GM12878 (cell line): ENCODE measurements at regions of chr13 and their contacts with region 1.

Region 1: DNA sequence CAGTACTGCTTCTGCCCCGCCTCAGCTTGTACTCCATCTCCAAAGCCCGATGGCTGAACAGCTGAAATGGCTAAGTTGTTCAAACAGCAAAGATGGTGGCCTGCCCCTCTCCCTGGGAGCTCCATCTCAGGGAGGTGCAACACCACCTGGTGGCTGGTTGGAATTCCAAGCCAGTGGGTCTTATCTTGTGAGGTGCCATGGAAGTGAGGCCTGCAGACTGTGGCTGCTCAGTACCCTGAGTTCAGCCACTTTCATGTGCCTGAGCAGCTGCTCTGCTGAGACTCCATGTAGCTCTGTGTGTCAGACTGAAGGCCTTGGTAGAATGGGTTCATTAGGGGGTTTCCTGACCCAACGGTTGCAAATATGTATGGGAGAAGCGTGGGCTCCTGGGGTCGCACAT is 67.3 kb upstream of the SPRY2 start:
- DNase-seq: no peak
- ATAC-seq: peak; percentile 75
- H3K4me3 ChIP-seq: no peak overlapping the region
- H3K27ac ChIP-seq: no peak overlapping the region
- H3K4me1 ChIP-seq: no peaks in the 10 kb centered on the region
- H3K27me3 ChIP-seq: no peaks in the 10 kb centered on the region
- CTCF ChIP-seq: 0 out of 6 replicates have a peak, but pooled peaks of 1 of the 3 experiments have one; percentile 17
- EP300 ChIP-seq: no peak
- POLR2A ChIP-seq: no peak
- RAD21 ChIP-seq: no peak

Region 2: DNA sequence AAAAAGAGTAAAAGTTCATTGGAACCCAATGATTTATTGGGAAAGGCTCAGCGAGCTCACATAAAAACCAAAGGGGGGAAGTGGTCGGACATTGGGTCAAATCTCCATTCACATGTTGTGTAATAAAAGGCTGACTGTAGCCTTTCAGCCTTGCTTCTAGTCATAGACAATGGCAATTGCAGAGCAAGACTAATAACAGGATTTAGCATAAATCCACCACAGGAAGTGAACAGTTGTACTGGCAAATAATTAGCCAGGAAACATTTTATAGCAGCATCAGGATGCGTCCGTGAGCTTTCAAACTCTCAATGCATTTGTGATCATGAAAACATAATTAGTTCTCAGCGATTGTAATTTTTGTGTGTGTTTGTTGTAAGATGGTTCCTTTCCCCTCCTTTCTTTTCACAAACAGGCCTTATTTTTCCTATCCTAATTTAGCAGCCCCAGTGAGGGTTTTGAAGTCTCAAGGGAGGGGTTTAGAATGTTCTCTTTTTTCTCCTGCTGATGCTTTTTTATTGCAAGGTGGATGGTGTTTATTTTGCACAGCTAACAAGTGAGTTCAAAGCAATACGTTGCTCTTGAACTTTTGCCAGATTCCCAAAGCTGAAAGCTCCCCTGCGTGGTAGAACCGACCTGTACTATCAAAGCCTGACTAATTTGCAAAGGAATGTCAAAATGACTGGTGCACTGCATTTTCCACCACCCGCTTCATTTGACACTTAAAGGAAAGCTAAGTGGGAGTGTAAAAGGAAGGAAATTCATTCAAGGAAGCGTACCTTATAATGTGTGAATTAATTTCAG is 172.9 kb before region 1 on chr13:
- CTCF ChIA-PET with region 1: no interaction called
- POLR2A ChIA-PET with region 1: no interaction called
- RAD21 ChIA-PET with region 1: no interaction called
- SMC1A ChIA-PET with region 1: no interaction called
- in situ Hi-C with region 1: no loop called
- intact Hi-C with region 1: no loop called
- DNase-seq: no peak
- ATAC-seq: peak; percentile 89
- H3K4me3 ChIP-seq: no peak overlapping the region
- H3K27ac ChIP-seq: no peak overlapping the region
- H3K4me1 ChIP-seq: no peaks in the 10 kb centered on the region
- H3K27me3 ChIP-seq: no peaks in the 10 kb centered on the region
- CTCF ChIP-seq: no peak
- EP300 ChIP-seq: peak in 1 of 2 experiments; percentile 64; a peak in 1 of 4 replicates
- POLR2A ChIP-seq: no peak
- RAD21 ChIP-seq: no peak

Region 3: DNA sequence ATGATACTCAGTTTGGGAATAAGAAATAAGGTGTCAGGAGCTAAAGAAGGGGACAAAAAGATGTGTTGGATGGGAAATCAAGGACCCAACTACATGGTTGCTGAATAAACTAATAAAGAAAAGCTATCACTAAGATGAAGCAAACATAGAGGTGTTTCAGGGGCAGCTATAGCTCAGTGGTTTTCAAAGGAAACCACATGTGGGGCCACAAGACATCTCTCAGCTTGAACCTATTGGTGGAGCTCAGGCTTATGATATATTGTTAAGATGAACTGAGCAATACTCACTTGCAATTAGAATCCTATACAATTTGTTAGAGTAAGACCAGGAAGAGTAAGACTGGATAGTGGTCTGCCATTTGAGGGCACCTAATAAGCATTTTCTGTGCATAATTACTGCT is 22.3 kb before region 1 on chr13:
- CTCF ChIA-PET with region 1: interaction called, 12 read pairs
- POLR2A ChIA-PET with region 1: interaction called, 3 read pairs
- RAD21 ChIA-PET with region 1: interaction called, 8 read pairs
- SMC1A ChIA-PET with region 1: interaction called, 8 read pairs
- in situ Hi-C with region 1: no loop called
- intact Hi-C with region 1: no loop called
- DNase-seq: no peak
- ATAC-seq: peak; percentile 91
- H3K4me3 ChIP-seq: no peak overlapping the region
- H3K27ac ChIP-seq: no peak overlapping the region
- H3K4me1 ChIP-seq: no peaks in the 10 kb centered on the region
- H3K27me3 ChIP-seq: no peaks in the 10 kb centered on the region
- CTCF ChIP-seq: no peak
- EP300 ChIP-seq: no peak
- POLR2A ChIP-seq: no peak
- RAD21 ChIP-seq: 0 out of 2 replicates have a peak, but pooled peaks have one; percentile 14

Region 4: DNA sequence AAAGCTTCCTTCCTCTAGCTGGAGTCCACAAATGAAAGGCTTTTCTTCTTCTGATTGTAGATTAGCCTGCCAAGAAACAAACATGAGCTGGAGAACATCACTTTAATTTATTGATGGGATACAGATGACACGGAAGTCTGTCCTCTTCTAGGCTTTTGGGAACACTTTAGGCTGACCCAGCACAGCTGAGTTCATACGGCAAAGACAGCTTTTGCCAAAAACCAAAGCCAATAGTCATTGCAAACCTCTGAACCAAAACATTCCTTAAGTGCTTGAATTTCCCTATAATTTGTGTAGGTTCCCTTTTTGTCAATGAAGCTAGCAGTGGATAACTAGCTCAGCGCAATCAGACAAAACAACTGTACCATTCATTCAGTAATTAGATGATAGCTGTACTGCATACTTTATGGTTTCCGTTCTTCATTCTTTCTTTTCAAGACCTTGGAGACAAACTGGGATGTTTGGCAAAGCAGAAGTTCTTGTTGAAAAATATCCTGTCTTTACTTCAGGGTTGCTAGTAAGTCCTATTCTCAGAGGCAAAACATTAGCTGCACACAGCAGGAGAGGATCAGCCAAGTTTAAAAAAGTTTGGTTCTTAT is 28.4 kb after region 1 on chr13:
- CTCF ChIA-PET with region 1: interaction called, 6 read pairs
- POLR2A ChIA-PET with region 1: interaction called, 7 read pairs
- RAD21 ChIA-PET with region 1: interaction called, 13 read pairs
- SMC1A ChIA-PET with region 1: interaction called, 707 read pairs
- in situ Hi-C with region 1: no loop called
- intact Hi-C with region 1: no loop called
- DNase-seq: no peak
- ATAC-seq: no peak
- H3K4me3 ChIP-seq: no peak overlapping the region
- H3K27ac ChIP-seq: no peak overlapping the region
- H3K4me1 ChIP-seq: no peaks in the 10 kb centered on the region
- H3K27me3 ChIP-seq: no peaks in the 10 kb centered on the region
- CTCF ChIP-seq: no peak
- EP300 ChIP-seq: no peak
- POLR2A ChIP-seq: no peak
- RAD21 ChIP-seq: no peak

Region 5: GRCh38 chr13:80454245-80454644 is 46.0 kb after region 1 on chr13:
- CTCF ChIA-PET with region 1: interaction called, 6 read pairs
- POLR2A ChIA-PET with region 1: interaction called, 10 read pairs
- RAD21 ChIA-PET with region 1: interaction called, 67 read pairs
- SMC1A ChIA-PET with region 1: interaction called, 707 read pairs
- in situ Hi-C with region 1: no loop called
- intact Hi-C with region 1: no loop called
- DNase-seq: peak; percentile 34
- ATAC-seq: peak; percentile 85
- H3K4me3 ChIP-seq: no peak overlapping the region
- H3K27ac ChIP-seq: no peak overlapping the region
- H3K4me1 ChIP-seq: no peaks in the 10 kb centered on the region
- H3K27me3 ChIP-seq: no peaks in the 10 kb centered on the region
- CTCF ChIP-seq: no peak
- EP300 ChIP-seq: peak; percentile 88 to 92
- POLR2A ChIP-seq: no peak
- RAD21 ChIP-seq: no peak